ENCODE measurements at regions of chr7 and their contacts with region 1.

Region 1: GRCh38 chr7:45035893-45036292 is 35.9 kb downstream of the CCM2 start:
- DNase-seq: peak in 4 of 35 experiments; percentile 10 to 32 (median 22)
- ATAC-seq: peak; percentile 43 to 73 (median 56)
- H3K4me3 ChIP-seq: peak overlapping the region; percentile 0 to 62
- H3K4me3 Mint-ChIP-seq: peak overlapping the region; percentile 69 to 91 (median 78)
- H3K27ac ChIP-seq: peak overlapping the region; percentile 33
- H3K27ac Mint-ChIP-seq: peak overlapping the region; percentile 73 to 89
- H3K4me1 ChIP-seq: peaks cover 43 to 78% of the 10 kb centered on the region in 2 experiments
- H3K4me1 Mint-ChIP-seq: peaks cover 81 to 85% (median 84%) of the 10 kb centered on the region in 3 donors
- H3K27me3 ChIP-seq: no peaks in the 10 kb centered on the region
- H3K27me3 Mint-ChIP-seq: no peaks in the 10 kb centered on the region

Region 2: GRCh38 chr7:44985033-44985695 is 50.7 kb before region 1 on chr7:
- CTCF ChIA-PET with region 1: interaction called in 1 of 2 experiments, 7 read pairs
- POLR2A ChIA-PET with region 1: interaction called in 1 of 2 experiments, 10 read pairs
- DNase-seq: no peak
- ATAC-seq: no peak
- H3K4me3 ChIP-seq: peak overlapping the region; percentile 88 to 95
- H3K4me3 Mint-ChIP-seq: peak overlapping the region; percentile 91 to 97 (median 94)
- H3K27ac ChIP-seq: peak overlapping the region; percentile 89
- H3K27ac Mint-ChIP-seq: peak overlapping the region; percentile 97
- H3K4me1 ChIP-seq: peaks cover 33 to 60% of the 10 kb centered on the region in 2 experiments
- H3K4me1 Mint-ChIP-seq: peaks cover 63 to 77% (median 65%) of the 10 kb centered on the region in 3 donors
- H3K27me3 ChIP-seq: no peaks in the 10 kb centered on the region
- H3K27me3 Mint-ChIP-seq: no peaks in the 10 kb centered on the region